Right ventricle myocardium inferior (tissue), 1 donor: ENCODE measurements at regions of chr11 and their contacts with region 1.

Region 1: GRCh38 chr11:9265211-9266131 is at the start of gene DENND5A:
- DNase-seq: peak; percentile 95
- ATAC-seq: peak; percentile 94
- total RNA-seq, gene DENND5A: 105 TPM

Region 2: DNA sequence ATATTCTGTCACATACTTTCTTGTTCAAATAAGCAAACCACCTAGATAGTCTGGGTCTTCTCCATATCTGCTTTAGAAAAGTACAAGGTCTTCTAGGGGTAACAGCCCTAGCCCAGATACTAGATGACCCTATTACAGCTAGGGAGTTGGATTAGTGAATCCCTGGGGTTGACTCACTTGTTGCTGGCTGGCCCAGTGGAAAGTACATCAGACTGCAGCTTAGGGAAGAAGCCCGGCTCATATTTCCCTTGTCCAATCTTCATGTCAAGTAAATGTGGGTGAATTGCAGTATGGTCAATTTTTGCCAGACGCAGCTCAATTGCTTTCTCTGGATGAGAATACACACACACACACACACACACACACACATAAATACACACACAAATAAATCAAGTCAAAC is 95.0 kb before region 1 on chr11:
- intact Hi-C with region 1: loop called (anchors 10 kb)
- DNase-seq: no peak
- ATAC-seq: no peak

Region 3: DNA sequence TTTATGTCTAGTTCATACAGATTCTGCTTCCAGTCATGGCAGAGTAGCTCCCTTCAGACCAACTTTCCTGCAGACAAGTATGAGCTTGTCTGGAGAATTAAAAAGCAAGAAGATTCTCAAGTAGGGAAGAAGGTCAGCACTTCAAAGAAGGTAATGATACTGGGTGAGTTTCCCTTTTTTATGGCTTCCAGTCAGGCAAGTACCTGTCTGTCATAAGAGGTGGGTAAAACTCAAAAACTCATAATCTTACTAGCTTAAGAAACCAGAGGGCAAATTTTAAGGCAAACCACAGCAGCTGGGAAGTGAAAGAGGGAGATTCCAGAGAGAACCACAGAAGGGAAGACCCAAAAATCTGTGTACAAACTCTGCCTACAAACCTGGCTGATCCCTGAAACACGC is 54.5 kb before region 1 on chr11:
- intact Hi-C with region 1: loop called (anchors 5 kb)
- DNase-seq: no peak
- ATAC-seq: no peak

Region 4: GRCh38 chr11:9314291-9315036 is 49.0 kb after region 1 on chr11 and contains the start of gene TMEM41B:
- intact Hi-C with region 1: loop called (anchors 2 kb)
- DNase-seq: peak; percentile 99
- ATAC-seq: peak; percentile 100
- total RNA-seq, gene TMEM41B: 17.4 TPM

Region 5: GRCh38 chr11:9363954-9364912 is 98.8 kb after region 1 on chr11:
- intact Hi-C with region 1: loop called (anchors 5 kb)
- DNase-seq: peak; percentile 98
- ATAC-seq: peak; percentile 97

Region 6: DNA sequence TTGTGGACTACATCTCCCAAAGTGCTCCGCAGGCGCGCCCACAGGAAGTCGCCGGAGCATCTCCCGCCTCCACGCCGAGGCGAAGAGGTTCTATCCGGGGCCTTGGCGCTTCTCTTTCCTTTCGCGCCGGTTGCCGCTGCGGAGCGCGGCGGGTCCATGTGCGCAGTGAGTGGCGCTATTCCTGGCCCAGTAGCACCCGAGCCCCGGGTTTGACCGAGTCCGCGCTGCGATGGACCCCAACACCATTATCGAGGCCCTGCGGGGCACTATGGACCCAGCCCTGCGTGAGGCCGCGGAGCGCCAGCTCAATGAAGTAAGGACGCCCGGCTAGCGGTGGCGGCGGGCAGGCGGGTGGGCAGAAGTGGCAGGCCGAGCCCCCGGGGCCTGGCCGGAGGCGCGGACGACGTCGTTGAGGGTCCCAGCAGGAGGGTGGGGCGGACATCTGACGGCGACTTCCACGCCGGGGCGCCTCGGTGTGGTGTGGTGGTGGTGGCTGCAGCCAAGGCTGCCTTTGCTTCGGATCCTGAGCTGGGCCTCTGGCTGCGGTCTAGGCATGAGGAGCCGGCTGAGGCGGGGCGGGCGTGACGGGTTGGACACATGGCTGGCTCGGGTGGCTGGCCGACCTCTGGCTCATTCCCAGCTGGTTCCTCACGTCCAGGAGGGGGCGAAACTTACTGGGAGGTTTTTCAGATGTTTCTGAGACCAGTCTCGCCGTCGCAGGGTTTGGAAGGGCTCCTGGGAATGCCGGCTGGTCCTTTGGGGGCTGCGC is 119.2 kb after region 1 on chr11 and contains the start of gene IPO7:
- intact Hi-C with region 1: loop called (anchors 2 kb)
- DNase-seq: peak; percentile 94
- ATAC-seq: peak; percentile 97
- total RNA-seq, gene IPO7: 130 TPM

Region 7: DNA sequence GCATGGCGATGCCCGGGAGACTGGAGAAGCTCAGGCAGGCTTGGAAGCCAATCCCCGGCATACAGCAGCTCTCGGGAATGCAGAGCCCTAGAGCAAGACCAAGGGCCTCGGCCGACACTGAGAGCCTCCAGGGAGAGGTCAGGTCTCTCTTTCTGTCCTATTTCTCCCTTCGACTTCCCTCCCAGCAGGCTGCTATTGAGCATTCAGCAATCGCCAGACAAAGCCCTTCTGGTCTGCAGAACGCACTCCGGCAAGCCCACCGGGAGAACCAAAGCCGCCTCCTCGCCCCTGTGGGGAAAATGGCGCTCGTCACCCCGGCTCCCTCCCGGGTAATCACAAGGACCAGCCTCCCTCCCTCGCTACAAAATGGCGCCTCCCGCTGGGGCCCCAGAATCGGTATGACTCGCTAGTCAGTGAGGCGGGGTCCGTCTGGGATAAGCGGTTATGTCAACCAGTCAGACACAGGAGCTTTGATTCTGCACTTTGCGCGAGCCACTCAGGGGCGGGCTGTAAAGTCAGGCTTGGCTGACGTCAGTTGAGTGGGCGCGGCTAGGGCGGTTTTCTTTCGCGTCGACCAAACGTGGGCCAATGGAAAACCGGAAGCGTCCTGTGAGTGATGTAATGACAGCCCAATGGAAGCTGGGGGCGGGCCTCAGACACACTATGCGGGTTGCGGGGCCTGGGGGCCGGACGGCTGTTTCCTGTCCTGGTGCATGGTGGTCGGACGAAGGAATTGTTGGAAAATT is 195.0 kb after region 1 on chr11 and contains the start of gene ZNF143:
- intact Hi-C with region 1: loop called (anchors 2 kb)
- DNase-seq: peak; percentile 100
- ATAC-seq: peak; percentile 98
- total RNA-seq, gene ZNF143: 22.7 TPM